SK-N-SH (cell line): ENCODE measurements at regions of chr1 and their contacts with region 1.

Region 1: DNA sequence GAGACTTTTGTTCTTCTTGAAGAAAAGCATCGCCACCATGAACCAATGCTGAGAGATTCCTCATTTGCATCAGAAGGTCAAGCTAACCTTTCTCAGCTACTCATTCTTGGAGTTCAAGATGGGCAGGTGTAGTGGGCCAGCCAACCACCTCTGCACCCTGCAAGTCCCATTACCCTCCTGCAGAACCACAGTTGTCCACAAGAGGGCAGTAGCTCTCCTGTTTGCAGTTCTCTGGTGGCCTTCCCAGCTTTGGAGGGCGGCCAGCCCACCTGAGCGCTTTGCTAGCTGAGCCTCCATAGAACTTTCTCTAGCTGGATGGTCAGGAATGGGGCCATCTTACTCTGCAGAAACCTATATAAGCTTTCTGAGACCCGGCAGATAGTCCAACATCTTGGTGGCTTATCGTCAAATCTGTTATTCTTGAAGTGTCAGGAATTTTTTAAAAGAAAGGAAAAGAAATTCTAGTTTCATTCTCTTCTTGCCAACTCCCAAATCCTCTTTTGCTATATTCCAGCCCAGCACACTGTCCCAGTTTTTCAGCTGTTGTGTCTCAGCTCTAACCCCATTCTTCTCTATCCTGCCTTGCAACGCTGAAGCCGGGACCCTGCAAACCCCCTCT is 11.0 kb upstream of the LMX1A start:
- DNase-seq: peak; percentile 81
- H3K4me3 ChIP-seq: no peak overlapping the region; a peak in 1 of 4 replicates
- H3K27ac ChIP-seq: no peak overlapping the region
- H3K4me1 ChIP-seq: no peaks in the 10 kb centered on the region
- H3K27me3 ChIP-seq: no peaks in the 10 kb centered on the region
- CTCF ChIP-seq: peak; percentile 94
- EP300 ChIP-seq: no peak
- RAD21 ChIP-seq: peak; percentile 44

Region 2: DNA sequence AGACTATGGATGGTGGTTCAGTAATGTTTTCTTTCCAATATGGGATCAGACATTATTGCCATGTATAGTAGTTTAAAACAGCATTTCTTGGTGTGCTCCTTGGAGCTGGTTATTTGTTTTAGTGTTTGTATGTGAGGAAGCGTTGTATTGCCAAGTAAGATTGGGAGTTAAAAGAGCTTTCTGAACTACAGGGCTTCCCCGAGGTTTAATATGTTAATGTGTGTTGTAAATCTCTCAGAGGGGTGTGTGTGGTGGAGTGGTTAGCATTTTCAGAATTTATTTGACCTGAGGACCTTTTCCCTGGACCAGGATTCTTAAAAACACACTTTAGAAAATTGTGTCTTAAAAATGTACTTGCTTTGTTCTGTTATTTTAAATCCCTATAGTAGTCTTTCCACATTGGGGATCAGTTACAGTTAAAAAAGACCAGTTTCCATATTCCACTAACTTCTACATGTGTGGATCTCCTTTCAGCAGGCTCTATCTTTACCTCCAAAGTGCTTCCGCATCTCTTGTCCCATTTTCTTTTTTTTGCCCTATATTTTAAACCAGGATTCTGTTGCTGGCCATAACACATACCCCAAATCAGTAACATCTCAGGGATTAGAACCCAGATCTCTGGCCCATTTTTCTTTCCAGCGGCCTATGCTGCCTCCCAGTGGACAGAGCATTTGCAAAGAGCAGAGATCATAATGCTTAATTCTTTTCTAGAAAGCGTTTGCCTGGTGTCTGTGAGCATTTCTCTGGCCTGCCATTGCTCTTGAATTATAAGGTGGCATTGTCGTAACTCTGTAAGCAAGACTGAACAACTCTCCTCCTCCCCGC is 749.9 kb before region 1 on chr1:
- CTCF ChIA-PET with region 1: no interaction called
- POLR2A ChIA-PET with region 1: no interaction called
- DNase-seq: peak; percentile 31
- H3K4me3 ChIP-seq: no peak overlapping the region
- H3K27ac ChIP-seq: no peak overlapping the region
- H3K4me1 ChIP-seq: peaks cover 0 to 2% of the 10 kb centered on the region in 2 experiments; a peak in 1 of 4 replicates
- H3K27me3 ChIP-seq: no peaks in the 10 kb centered on the region
- CTCF ChIP-seq: peak; percentile 73
- EP300 ChIP-seq: no peak
- RAD21 ChIP-seq: peak; percentile 83

Region 3: DNA sequence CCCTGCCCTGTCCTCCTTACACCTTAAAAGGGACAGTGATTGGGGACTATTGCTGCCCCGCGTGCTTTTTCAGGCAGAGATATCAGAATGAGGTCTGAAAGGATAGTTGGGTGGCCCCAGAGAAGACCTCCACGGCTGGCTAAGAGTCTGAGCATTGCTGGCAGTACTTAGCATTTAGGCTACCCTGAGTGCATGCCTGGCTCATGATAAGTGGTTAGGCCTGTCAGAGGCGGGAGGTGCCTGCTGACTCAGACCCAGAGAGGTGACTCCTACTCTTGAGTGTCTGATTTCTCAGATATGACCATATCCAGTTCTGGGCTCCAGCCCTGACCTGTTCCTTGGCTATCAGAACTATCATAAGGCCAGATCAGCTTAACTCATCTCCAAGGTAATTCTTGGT is 594.8 kb before region 1 on chr1:
- CTCF ChIA-PET with region 1: no interaction called
- POLR2A ChIA-PET with region 1: no interaction called
- DNase-seq: no peak
- H3K4me3 ChIP-seq: no peak overlapping the region
- H3K27ac ChIP-seq: peak overlapping the region; percentile 93 to 96
- H3K4me1 ChIP-seq: peaks cover 44 to 46% of the 10 kb centered on the region in 2 experiments
- H3K27me3 ChIP-seq: no peaks in the 10 kb centered on the region
- CTCF ChIP-seq: no peak
- EP300 ChIP-seq: peak; percentile 35 to 92; a peak in 3 of 4 replicates
- RAD21 ChIP-seq: no peak

Region 4: GRCh38 chr1:165129568-165130164 is 237.8 kb before region 1 on chr1:
- CTCF ChIA-PET with region 1: interaction called, 13 read pairs
- POLR2A ChIA-PET with region 1: no interaction called
- DNase-seq: peak; percentile 41
- H3K4me3 ChIP-seq: peak overlapping the region in 1 of 2 experiments; percentile 36; a peak in 1 of 4 replicates
- H3K27ac ChIP-seq: no peak overlapping the region
- H3K4me1 ChIP-seq: no peaks in the 10 kb centered on the region
- H3K27me3 ChIP-seq: no peaks in the 10 kb centered on the region
- CTCF ChIP-seq: peak; percentile 60
- EP300 ChIP-seq: no peak
- RAD21 ChIP-seq: peak; percentile 47

Region 5: GRCh38 chr1:165144757-165145397 is 222.6 kb before region 1 on chr1:
- CTCF ChIA-PET with region 1: interaction called, 19 read pairs
- POLR2A ChIA-PET with region 1: no interaction called
- DNase-seq: peak; percentile 38
- H3K4me3 ChIP-seq: no peak overlapping the region; a peak in 1 of 4 replicates
- H3K27ac ChIP-seq: no peak overlapping the region
- H3K4me1 ChIP-seq: no peaks in the 10 kb centered on the region
- H3K27me3 ChIP-seq: no peaks in the 10 kb centered on the region
- CTCF ChIP-seq: peak; percentile 82
- EP300 ChIP-seq: no peak
- RAD21 ChIP-seq: peak; percentile 62

Region 6: GRCh38 chr1:165355977-165356811 is 11.3 kb before region 1 on chr1 and contains the start of gene LMX1A:
- CTCF ChIA-PET with region 1: interaction called, 124 read pairs
- POLR2A ChIA-PET with region 1: no interaction called
- DNase-seq: no peak
- H3K4me3 ChIP-seq: no peak within 1 kb of the TSS
- H3K27ac ChIP-seq: no peak within 1 kb of the TSS
- H3K4me1 ChIP-seq: no peaks in the 10 kb centered on the region
- H3K27me3 ChIP-seq: peaks cover 51% of the 10 kb centered on the region
- CTCF ChIP-seq: no peak
- EP300 ChIP-seq: no peak
- RAD21 ChIP-seq: no peak
- polyA plus RNA-seq, gene LMX1A: not detected in 2 replicates

Region 7: DNA sequence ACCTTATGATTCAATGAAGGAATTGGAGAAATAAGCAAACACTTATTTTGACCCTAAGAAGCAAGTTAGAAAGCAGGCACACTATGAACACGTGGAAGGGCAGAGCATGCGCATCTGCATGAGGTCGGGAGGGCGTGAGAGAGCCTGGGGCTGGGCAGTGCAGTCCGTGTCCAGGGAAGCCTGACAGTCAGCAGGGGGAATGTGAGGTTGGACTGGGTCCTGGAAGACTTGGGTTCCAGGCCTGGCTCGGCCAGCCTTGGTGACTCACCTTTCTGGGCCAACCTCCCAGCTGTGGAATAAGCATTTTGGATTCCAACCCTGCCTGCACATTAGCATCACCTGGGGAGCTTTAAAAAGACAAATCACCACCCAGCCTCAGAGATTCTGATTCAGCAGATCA is 15.6 kb after region 1 on chr1:
- CTCF ChIA-PET with region 1: interaction called, 59 read pairs
- POLR2A ChIA-PET with region 1: no interaction called
- DNase-seq: no peak
- H3K4me3 ChIP-seq: no peak overlapping the region
- H3K27ac ChIP-seq: no peak overlapping the region
- H3K4me1 ChIP-seq: no peaks in the 10 kb centered on the region
- H3K27me3 ChIP-seq: peaks cover 27% of the 10 kb centered on the region
- CTCF ChIP-seq: no peak
- EP300 ChIP-seq: no peak
- RAD21 ChIP-seq: no peak

Region 8: GRCh38 chr1:165392634-165393571 is 25.4 kb after region 1 on chr1:
- CTCF ChIA-PET with region 1: interaction called, 61 read pairs
- POLR2A ChIA-PET with region 1: no interaction called
- DNase-seq: peak; percentile 78
- H3K4me3 ChIP-seq: peak overlapping the region in 1 of 2 experiments; percentile 45; a peak in 1 of 4 replicates
- H3K27ac ChIP-seq: no peak overlapping the region
- H3K4me1 ChIP-seq: peaks cover 0 to 2% of the 10 kb centered on the region in 2 experiments; a peak in 1 of 4 replicates
- H3K27me3 ChIP-seq: peaks cover 14% of the 10 kb centered on the region
- CTCF ChIP-seq: peak; percentile 97
- EP300 ChIP-seq: no peak
- RAD21 ChIP-seq: peak; percentile 82

Region 9: DNA sequence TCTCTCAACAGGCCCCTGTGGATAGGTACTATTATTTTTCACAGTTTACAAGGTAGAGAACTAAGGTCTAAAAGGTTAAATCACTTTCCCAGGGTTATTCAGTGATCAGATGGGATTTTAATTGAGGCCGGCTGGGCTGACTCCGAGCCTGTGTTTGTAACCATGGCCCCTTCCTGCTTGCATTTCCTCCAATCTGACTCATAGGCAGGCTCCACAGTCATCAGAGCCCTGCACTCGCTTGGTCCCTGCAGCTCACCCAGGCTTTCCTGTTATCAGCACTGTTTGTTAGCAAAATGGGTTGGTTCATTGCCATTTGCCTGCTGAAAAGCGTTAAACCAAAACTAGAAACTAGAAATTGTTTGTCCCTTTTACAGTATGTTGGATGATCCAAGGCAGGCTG is 30.5 kb after region 1 on chr1:
- CTCF ChIA-PET with region 1: interaction called, 61 read pairs
- POLR2A ChIA-PET with region 1: no interaction called
- DNase-seq: no peak
- H3K4me3 ChIP-seq: no peak overlapping the region
- H3K27ac ChIP-seq: peak overlapping the region in 1 of 2 experiments; percentile 58; a peak in 2 of 4 replicates
- H3K4me1 ChIP-seq: peaks cover 0 to 2% of the 10 kb centered on the region in 2 experiments; a peak in 1 of 4 replicates
- H3K27me3 ChIP-seq: no peaks in the 10 kb centered on the region
- CTCF ChIP-seq: no peak
- EP300 ChIP-seq: no peak
- RAD21 ChIP-seq: no peak